Endothelial cell of umbilical vein (primary cell): ENCODE measurements at regions of chr1 and their contacts with region 1.

Region 1: DNA sequence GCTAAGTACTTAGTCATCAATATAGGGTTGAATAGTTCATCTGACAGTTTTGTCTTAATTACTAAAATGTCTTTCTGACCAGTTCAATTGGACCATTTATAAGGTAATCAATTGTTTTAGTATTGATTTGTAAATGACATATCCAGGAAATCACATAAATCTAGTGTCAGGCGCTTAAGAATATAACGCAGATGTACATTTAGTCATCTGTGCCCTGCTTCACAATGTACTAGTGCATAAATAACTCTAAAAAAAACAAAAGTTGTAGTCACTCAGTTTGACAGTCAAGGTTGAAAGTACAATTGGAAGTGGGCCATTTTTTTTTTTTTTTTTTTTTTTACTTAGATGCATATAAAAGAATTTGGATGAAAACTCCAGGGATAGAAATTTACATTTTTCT is 490.4 kb downstream of the PTPRC start:
- DNase-seq: peak; percentile 66
- H3K4me3 ChIP-seq: no peak overlapping the region
- H3K27ac ChIP-seq: no peak overlapping the region
- H3K4me1 ChIP-seq: peaks cover 3% of the 10 kb centered on the region
- H3K27me3 ChIP-seq: no peaks in the 10 kb centered on the region
- CTCF ChIP-seq: no peak
- POLR2A ChIP-seq: no peak

Region 2: DNA sequence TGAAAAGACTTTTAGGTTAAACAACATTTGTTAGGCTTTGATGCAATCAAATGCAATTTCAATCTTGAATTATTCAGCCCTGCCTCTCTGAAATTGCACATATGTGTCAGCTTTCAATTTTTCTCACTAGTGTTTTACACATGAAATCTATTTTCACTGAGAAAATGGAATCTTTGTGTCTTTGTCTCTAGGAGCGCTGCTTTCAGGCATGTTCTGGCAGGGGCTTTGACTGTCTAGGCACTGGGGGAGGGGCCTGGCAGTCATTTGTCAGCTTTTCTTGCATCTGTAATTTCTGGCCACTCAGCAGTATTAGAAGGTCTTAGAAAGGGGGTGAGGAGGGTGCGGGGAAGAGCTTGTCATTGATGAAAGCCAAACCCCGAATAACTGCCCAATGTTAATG is 226.0 kb before region 1 on chr1:
- CTCF ChIA-PET with region 1: no interaction called
- POLR2A ChIA-PET with region 1: no interaction called
- dilution Hi-C with region 1: no loop called
- intact Hi-C with region 1: no loop called
- DNase-seq: no peak
- H3K4me3 ChIP-seq: no peak overlapping the region
- H3K27ac ChIP-seq: no peak overlapping the region
- H3K4me1 ChIP-seq: peaks cover 17% of the 10 kb centered on the region
- H3K27me3 ChIP-seq: no peaks in the 10 kb centered on the region
- CTCF ChIP-seq: no peak
- POLR2A ChIP-seq: no peak

Region 3: DNA sequence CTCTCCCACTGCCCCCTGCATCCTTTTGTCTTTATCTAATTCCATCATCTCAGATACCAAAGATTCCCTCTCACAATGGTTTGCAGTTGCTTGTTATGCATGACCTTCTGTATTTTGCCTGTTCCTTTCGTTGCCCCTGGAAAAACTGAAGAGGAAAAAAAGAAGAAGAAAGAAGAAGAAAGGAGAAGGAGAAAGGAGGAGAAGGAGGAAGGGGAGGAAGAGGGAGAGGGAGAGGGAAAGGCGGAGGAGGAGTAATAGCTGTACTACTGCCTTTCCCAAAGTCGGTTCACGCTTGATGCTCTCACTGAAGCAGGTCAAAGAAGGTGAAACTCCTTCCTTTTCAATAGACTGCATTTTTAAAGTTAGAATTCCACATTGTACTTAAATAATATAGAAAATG is 23.5 kb after region 1 on chr1:
- CTCF ChIA-PET with region 1: no interaction called
- POLR2A ChIA-PET with region 1: no interaction called
- dilution Hi-C with region 1: no loop called
- intact Hi-C with region 1: loop called (anchors 1 kb)
- DNase-seq: no peak
- H3K4me3 ChIP-seq: no peak overlapping the region
- H3K27ac ChIP-seq: no peak overlapping the region
- H3K4me1 ChIP-seq: no peaks in the 10 kb centered on the region
- H3K27me3 ChIP-seq: peaks cover 0 to 3% of the 10 kb centered on the region in 2 experiments
- CTCF ChIP-seq: no peak
- POLR2A ChIP-seq: no peak

Region 4: DNA sequence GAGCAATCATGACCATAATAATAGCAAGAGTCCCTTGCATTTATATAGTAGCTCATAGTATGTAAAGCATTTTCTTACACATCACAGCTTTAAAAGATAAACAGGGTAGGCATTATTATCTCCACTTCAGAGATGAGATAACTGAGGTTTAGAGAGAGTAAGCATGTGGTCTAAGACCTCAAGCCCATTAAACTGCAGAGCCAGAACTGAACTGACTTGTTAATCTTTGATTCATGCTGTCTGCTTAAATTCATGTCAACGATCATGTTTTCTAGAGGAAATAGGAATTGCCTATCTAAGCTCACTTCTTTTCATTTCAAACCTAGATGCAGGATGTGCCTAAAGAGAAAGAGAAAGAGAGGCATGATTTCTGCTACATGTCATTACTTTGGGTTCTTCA is 34.4 kb after region 1 on chr1:
- CTCF ChIA-PET with region 1: no interaction called
- POLR2A ChIA-PET with region 1: no interaction called
- dilution Hi-C with region 1: no loop called
- intact Hi-C with region 1: loop called (anchors 1 kb)
- DNase-seq: no peak
- H3K4me3 ChIP-seq: no peak overlapping the region
- H3K27ac ChIP-seq: no peak overlapping the region
- H3K4me1 ChIP-seq: no peaks in the 10 kb centered on the region
- H3K27me3 ChIP-seq: no peaks in the 10 kb centered on the region
- CTCF ChIP-seq: no peak
- POLR2A ChIP-seq: no peak